ENCODE measurements at regions of chr10 and their contacts with region 1.

Region 1: GRCh38 chr10:82150120-82150900 is 275.3 kb downstream of the NRG3 start:
- DNase-seq: peak; percentile 91
- ATAC-seq: peak; percentile 99
- H3K4me3 Mint-ChIP-seq: no peak overlapping the region
- H3K27ac Mint-ChIP-seq: no peak overlapping the region; the same call in 1 of the 2 replicates
- H3K4me1 Mint-ChIP-seq: peaks cover 27% of the 10 kb centered on the region
- H3K27me3 Mint-ChIP-seq: no peaks in the 10 kb centered on the region
- CTCF ChIP-seq: peak; percentile 77

Region 2: GRCh38 chr10:81953420-81953819 is 196.9 kb before region 1 on chr10:
- CTCF ChIA-PET with region 1: no interaction called
- POLR2A ChIA-PET with region 1: no interaction called
- DNase-seq: no peak
- ATAC-seq: no peak
- H3K4me3 Mint-ChIP-seq: no peak overlapping the region
- H3K27ac Mint-ChIP-seq: no peak overlapping the region
- H3K4me1 Mint-ChIP-seq: peaks cover 23% of the 10 kb centered on the region
- H3K27me3 Mint-ChIP-seq: no peaks in the 10 kb centered on the region
- CTCF ChIP-seq: no peak

Region 3: DNA sequence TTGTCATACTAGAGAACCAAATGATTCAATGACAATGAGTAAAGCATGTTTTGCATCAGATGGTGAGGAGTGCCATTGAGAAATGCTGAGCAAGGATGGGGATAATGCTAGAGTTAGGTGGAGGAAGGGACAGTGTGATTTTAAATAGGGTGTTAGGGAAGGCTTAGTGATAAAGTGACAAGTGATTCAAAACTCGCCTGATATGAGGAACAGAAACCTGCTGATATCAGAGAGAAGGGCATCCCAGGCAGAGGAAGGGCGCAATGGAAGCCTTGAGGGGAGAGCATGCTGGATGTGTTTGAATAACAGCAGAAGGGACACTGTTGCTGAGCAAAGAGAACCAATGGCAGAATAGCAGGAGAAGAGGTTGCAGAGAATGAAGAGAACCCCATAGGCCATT is 79.1 kb before region 1 on chr10:
- CTCF ChIA-PET with region 1: no interaction called
- POLR2A ChIA-PET with region 1: no interaction called
- DNase-seq: no peak
- ATAC-seq: no peak
- H3K4me3 Mint-ChIP-seq: no peak overlapping the region
- H3K27ac Mint-ChIP-seq: no peak overlapping the region
- H3K4me1 Mint-ChIP-seq: peaks cover 30% of the 10 kb centered on the region
- H3K27me3 Mint-ChIP-seq: no peaks in the 10 kb centered on the region
- CTCF ChIP-seq: no peak

Region 4: DNA sequence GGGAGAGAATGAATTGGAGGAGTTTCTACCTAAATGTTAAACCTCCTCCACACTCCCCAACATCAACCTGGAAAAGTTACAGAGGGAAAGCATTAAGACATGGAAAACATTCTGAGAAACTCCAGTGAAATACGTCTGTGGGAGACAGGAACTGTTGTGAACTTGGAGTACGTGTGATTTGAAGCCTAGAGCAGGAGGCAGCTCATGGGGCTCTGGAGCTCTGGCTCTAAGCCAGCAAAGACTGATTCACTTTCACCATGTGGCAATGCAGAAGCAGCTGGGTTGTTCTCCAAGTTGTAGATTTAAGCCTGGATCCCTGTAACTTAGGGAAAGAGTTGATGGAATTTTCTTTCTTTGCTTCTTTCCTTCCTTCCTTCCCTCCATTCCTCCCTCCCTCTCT is 227.8 kb after region 1 on chr10:
- CTCF ChIA-PET with region 1: interaction called, 11 read pairs
- POLR2A ChIA-PET with region 1: interaction called, 3 read pairs
- DNase-seq: no peak
- ATAC-seq: no peak
- H3K4me3 Mint-ChIP-seq: no peak overlapping the region
- H3K27ac Mint-ChIP-seq: no peak overlapping the region
- H3K4me1 Mint-ChIP-seq: no peaks in the 10 kb centered on the region; the same call in 1 of the 2 replicates
- H3K27me3 Mint-ChIP-seq: no peaks in the 10 kb centered on the region
- CTCF ChIP-seq: no peak

Region 5: DNA sequence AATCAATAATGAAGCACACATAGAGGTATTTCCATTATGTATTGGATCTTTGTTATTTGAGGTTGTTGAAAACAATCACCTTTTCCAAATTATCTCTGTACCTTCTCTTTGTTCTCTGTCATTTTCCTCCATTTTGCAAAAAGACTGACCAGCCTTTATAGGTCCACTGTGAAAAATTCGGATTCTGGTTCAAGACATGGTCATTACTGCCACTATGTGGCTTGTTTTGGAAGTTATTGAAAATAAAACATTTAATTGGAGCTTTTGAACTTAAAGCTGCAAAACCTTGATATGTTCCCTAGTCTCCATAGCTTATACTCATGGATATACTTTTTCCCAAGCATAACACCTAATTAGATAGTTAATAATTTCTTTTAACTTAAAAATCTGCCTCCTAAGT is 819.1 kb after region 1 on chr10:
- CTCF ChIA-PET with region 1: interaction called, 11 read pairs
- POLR2A ChIA-PET with region 1: no interaction called
- DNase-seq: no peak
- ATAC-seq: no peak
- H3K4me3 Mint-ChIP-seq: no peak overlapping the region
- H3K27ac Mint-ChIP-seq: no peak overlapping the region; the same call in 1 of the 2 replicates
- H3K4me1 Mint-ChIP-seq: peaks cover 28% of the 10 kb centered on the region
- H3K27me3 Mint-ChIP-seq: no peaks in the 10 kb centered on the region
- CTCF ChIP-seq: no peak

Measured in WTC11 (cell line).